Transverse colon (tissue), 4 donors: ENCODE measurements at regions of chr16 and their contacts with region 1.

Region 1: DNA sequence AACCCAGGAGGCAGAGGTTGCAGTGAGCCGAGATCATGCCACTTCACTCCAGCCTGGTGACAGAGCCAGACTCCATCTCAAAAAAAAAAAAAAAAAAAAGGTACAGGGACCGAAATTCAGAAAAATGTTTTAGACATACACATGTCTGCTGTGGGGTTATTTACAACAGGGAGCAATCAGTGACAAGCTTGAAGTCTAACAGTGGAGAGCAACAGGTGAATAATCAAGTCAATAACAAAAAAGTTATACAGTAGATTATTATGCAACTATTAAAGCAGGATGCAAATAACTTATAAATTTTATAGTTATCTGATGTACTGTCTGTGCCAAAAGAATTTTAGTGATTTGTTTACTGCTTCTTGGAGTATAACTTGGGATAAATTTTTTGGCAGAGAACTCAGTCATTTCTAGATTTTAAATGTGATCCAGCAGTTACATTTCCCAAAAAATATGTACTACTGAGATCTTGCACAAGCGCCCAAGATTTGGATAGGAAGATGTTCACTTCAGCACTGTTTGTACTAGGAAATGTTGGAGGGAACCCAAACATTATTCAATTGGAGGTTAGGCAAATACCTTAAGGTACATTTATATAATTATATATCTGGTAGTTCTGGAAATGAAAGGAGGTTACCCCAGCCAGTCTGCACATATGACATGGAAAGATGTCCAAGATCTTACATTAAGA is 34.1 kb downstream of the EEF2K start:
- DNase-seq: no peak
- H3K4me3 ChIP-seq: no peak overlapping the region
- H3K27ac ChIP-seq: peak overlapping the region; percentile 67 to 83 (median 72)
- H3K4me1 ChIP-seq: peaks cover 4 to 55% (median 22%) of the 10 kb centered on the region in 4 donors
- H3K27me3 ChIP-seq: no peaks in the 10 kb centered on the region
- CTCF ChIP-seq: no peak
- EP300 ChIP-seq: no peak
- POLR2A ChIP-seq: no peak

Region 2: DNA sequence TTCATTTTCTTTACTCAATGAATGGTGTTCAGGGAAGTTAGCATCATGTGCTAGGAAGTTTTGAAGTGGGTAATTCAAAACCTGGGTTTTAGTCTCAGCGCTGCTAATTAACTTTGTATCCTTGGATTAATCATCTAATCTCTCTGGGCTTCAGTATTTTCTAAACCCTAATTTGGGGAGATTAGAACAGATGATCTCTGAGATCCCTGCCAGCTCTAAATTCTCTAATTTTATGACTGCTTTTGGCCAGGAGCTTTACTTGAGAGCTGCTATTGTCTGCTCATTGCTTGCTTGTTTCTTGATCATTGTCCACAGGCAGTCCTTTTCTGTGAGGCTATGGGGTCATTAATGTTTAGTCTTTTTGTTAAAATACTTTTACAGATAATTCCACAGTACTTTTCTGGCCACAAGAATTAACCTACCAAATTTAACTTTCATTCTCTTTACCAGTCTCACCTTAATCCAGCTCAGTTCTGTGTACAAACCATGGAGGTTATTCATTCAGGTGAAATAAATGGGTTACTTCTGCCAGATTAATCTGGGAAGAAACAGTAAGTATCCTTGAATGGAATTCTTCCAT is 176.2 kb before region 1 on chr16:
- in situ Hi-C with region 1: no loop called
- intact Hi-C with region 1: no loop called
- DNase-seq: no peak
- H3K4me3 ChIP-seq: no peak overlapping the region
- H3K27ac ChIP-seq: no peak overlapping the region
- H3K4me1 ChIP-seq: no peaks in the 10 kb centered on the region
- H3K27me3 ChIP-seq: no peaks in the 10 kb centered on the region
- CTCF ChIP-seq: no peak
- EP300 ChIP-seq: no peak
- POLR2A ChIP-seq: no peak

Region 3: GRCh38 chr16:22109258-22109898 is 130.8 kb before region 1 on chr16:
- in situ Hi-C with region 1: no loop called
- intact Hi-C with region 1: no loop called
- DNase-seq: no peak
- H3K4me3 ChIP-seq: no peak overlapping the region
- H3K27ac ChIP-seq: no peak overlapping the region
- H3K4me1 ChIP-seq: no peaks in the 10 kb centered on the region
- H3K27me3 ChIP-seq: peaks cover 6% of the 10 kb centered on the region
- CTCF ChIP-seq: no peak
- EP300 ChIP-seq: no peak
- POLR2A ChIP-seq: no peak

Region 4: DNA sequence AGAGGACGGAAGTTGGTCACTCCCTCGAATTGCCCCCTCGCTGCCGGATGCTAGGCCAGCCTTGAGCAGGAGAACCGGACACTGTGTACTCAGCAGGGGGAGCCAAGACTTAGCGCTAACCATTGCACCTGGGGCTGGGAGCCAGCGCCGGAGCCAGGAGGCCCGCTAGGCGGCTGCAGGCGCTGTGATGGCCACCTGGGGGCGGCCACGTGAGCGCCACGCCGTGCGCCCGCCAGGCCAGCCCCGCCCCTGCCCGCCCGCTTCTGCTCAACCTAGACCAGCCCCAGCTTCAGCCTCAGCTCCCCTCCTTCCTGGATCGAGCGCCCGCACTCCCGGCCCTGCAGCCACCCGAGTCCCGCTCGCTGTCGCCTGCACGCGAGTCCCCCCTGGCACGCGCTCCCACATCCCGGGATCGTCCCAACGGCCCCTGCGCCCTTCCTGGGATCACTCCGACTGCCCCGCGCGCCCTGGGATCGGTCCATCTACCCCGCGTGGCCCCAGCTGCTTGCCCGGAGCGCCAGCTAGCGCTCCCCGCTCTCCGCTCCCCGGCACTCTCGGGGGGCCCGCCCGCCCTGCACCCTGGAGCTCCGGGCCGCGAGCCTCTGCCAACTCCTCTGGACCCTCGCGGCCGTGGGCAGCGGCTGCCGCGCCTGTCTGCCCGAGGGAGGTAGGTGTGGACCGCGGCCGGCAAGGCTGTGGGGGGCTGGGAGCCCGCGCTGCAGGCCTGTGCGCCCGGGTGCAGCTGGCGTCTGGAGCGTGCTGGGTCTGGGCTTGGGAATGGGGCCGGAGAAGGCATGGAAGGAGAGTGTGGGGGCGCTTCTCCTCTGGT is 33.9 kb before region 1 on chr16 and contains the start of gene EEF2K:
- in situ Hi-C with region 1: no loop called
- intact Hi-C with region 1: loop called (anchors 5 kb)
- DNase-seq: peak; percentile 95
- H3K4me3 ChIP-seq: peak within 1 kb of the TSS; percentile 69 to 95 (median 84)
- H3K27ac ChIP-seq: peak within 1 kb of the TSS; percentile 90 to 97 (median 94)
- H3K4me1 ChIP-seq: peaks cover 17 to 52% (median 31%) of the 10 kb centered on the region in 4 donors
- H3K27me3 ChIP-seq: no peaks in the 10 kb centered on the region
- CTCF ChIP-seq: peak; percentile 72 to 97 (median 86)
- EP300 ChIP-seq: no peak
- POLR2A ChIP-seq: peak; percentile 60
- total RNA-seq, gene EEF2K: 22.2 to 223 (median 50.1) TPM